Activated B cell treated with CpG ODN at 0.5 μM for 24 hours (primary cell): ENCODE measurements at regions of chr11 and their contacts with region 1.

Region 1: GRCh38 chr11:535519-536454 is at the start of gene HRAS:
- DNase-seq: peak; percentile 98
- ATAC-seq: peak; percentile 78
- H3K4me3 Mint-ChIP-seq: peak within 1 kb of the TSS; percentile 90
- H3K27ac Mint-ChIP-seq: peak within 1 kb of the TSS; percentile 96
- H3K4me1 Mint-ChIP-seq: peaks cover 26% of the 10 kb centered on the region
- H3K27me3 Mint-ChIP-seq: no peaks in the 10 kb centered on the region
- CTCF ChIP-seq: no peak
- total RNA-seq, gene HRAS: 37.2 and 43.9 TPM in 2 replicates

Region 2: GRCh38 chr11:236774-237767 is 298.7 kb before region 1 on chr11 and contains the start of gene PSMD13:
- CTCF ChIA-PET with region 1: no interaction called
- POLR2A ChIA-PET with region 1: interaction called, 3 read pairs
- intact Hi-C with region 1: loop called (anchors 1 kb)
- DNase-seq: peak; percentile 85
- ATAC-seq: peak; percentile 78
- H3K4me3 Mint-ChIP-seq: peak within 1 kb of the TSS; percentile 98
- H3K27ac Mint-ChIP-seq: peak within 1 kb of the TSS; percentile 99
- H3K4me1 Mint-ChIP-seq: peaks cover 41% of the 10 kb centered on the region
- H3K27me3 Mint-ChIP-seq: no peaks in the 10 kb centered on the region
- CTCF ChIP-seq: no peak
- total RNA-seq, gene PSMD13: 147 and 149 TPM in 2 replicates

Region 3: DNA sequence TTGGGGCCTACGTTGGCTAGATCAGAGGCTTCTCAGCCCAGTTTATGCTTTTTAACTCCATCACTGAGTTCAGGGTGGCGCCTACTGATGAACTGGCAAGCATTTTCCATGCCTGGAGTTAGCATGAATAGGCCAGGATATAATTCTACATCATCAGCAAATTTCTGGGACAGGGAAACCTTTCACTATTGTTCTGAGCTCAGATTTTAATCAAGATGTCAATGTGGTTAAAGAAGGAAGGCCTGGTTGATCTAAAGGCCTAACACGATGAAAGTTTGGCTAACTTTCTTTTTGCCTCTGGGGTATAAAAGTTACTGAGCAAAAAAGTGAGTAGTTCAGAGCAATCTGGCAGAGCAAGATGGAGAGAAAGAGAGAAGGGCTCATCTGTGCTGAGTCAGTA is 193.5 kb before region 1 on chr11:
- CTCF ChIA-PET with region 1: no interaction called
- POLR2A ChIA-PET with region 1: no interaction called
- intact Hi-C with region 1: no loop called
- DNase-seq: no peak
- ATAC-seq: no peak
- H3K4me3 Mint-ChIP-seq: no peak overlapping the region
- H3K27ac Mint-ChIP-seq: peak overlapping the region; percentile 32
- H3K4me1 Mint-ChIP-seq: peaks cover 22% of the 10 kb centered on the region
- H3K27me3 Mint-ChIP-seq: no peaks in the 10 kb centered on the region
- CTCF ChIP-seq: no peak

Region 4: DNA sequence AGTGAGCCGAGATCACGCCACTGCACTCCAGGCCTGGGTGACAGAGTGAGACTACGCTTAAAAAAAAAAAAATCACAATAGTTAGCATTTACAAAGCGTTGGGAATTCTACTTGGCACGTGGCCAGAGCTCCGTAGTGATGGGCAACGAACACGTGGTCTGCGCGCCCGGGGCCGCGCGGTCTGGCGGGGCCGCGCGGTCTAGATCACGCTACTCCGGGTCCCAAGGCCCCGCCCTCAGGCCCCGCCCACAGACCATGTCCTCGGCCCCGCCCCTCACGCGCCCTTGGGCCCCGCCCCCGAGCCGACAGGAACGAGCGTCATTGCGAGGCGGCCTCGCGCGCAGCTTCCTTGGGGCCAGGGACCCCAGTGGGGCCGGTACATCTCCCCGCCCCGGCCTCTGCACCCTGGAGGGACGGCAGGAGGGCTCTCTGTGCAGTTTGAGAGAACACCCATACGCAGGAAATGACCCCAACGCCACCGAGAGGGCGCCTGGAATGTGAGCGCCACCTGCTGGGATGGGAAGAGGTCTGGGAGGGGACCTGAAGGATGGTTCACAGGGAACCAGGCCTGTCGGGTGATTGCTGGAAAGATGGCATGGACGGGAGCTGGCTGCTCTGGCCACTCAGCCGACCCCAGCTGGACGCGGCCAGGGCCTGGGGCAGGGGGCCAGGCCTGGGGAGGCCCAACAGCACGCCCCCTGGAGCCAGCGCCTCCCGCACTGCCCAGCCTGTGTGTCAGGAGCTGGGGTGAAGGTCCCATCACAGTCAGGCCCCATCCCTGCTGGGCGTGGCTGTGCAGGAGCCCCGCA is 87.7 kb before region 1 on chr11:
- CTCF ChIA-PET with region 1: no interaction called
- POLR2A ChIA-PET with region 1: interaction called, 33 read pairs
- intact Hi-C with region 1: loop called (anchors 1 kb)
- DNase-seq: peak; percentile 97
- ATAC-seq: peak; percentile 75
- H3K4me3 Mint-ChIP-seq: peak overlapping the region; percentile 94
- H3K27ac Mint-ChIP-seq: peak overlapping the region; percentile 95
- H3K4me1 Mint-ChIP-seq: peaks cover 34% of the 10 kb centered on the region
- H3K27me3 Mint-ChIP-seq: no peaks in the 10 kb centered on the region
- CTCF ChIP-seq: no peak

Region 5: DNA sequence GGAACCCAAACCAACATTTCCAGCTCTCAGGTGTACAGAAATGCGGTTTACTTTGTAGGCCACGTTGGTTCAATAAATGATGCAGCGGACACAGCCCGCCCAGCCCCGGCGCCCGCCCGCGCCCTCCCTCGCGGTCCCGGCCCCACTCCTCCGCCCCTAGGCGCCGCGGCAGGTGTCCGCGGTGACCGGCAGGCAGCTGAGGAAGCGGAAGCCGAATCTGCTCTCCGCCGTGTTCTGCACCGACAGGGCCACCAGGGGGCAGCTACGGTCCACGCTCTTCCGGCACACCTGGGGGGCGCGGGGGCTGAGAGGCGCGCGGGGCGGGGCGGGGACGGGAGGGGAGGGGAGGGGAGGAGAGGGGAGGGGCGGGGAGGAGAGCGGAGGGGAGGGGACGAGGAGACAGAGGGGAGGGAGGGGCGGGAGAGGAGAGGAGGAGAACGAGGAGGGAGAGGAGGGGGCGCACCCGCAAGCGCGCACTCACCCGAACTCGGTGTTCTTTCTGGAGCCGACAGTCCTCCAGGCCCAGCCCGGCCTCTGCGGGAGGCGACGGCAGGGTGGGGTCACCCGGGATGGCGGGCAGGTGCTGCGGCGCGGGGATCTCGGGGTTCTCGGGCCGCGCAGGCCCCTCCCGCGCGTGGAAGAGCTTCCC is 19.2 kb after region 1 on chr11:
- CTCF ChIA-PET with region 1: interaction called, 3 read pairs
- POLR2A ChIA-PET with region 1: interaction called, 22 read pairs
- intact Hi-C with region 1: loop called (anchors 1 kb)
- DNase-seq: peak; percentile 70
- ATAC-seq: peak; percentile 93
- H3K4me3 Mint-ChIP-seq: peak overlapping the region; percentile 24
- H3K27ac Mint-ChIP-seq: no peak overlapping the region
- H3K4me1 Mint-ChIP-seq: peaks cover 6% of the 10 kb centered on the region
- H3K27me3 Mint-ChIP-seq: no peaks in the 10 kb centered on the region
- CTCF ChIP-seq: no peak

Region 6: DNA sequence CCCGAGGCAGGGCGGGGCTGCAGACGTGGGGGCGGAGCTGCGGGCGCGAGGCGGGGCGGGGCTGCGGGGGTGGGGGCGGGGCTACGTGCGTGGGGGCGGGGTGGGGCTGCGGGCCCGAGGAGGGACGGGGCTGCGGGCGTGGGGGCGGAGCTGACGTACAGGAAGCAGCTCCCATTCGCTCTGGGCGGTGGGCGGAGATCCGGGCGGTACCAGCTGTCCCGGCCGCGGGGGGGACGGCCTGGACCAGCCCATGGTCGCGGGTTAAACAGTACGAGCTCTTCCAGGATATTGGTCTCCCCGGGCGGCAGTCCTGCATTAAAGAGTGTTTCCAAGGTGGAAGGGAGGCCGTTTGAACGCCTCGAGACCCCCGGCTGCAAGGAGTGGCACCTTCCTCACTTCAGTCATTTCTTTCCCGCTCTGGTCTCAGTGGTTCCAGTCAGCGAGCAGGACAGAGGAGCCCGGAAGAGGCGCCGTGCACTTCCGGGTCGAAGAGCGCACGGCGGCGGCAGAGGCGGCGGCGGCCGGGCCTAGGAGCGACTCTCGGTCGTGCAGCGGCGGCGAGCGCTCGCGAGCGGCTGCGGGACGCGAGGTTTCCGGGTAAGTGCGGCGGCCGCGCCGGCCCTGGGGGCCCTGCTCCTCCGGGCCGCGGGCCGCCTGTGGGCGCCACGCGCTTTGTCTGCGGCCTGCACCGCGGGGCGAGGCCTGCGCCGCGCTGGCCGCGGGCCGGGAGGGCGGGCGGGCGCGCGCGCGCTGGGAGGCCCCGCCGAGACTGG is 40.4 kb after region 1 on chr11 and contains the start of gene PHRF1:
- CTCF ChIA-PET with region 1: no interaction called
- POLR2A ChIA-PET with region 1: interaction called, 43 read pairs
- intact Hi-C with region 1: loop called (anchors 1 kb)
- DNase-seq: peak; percentile 93
- ATAC-seq: peak; percentile 90
- H3K4me3 Mint-ChIP-seq: peak within 1 kb of the TSS; percentile 97
- H3K27ac Mint-ChIP-seq: peak within 1 kb of the TSS; percentile 100
- H3K4me1 Mint-ChIP-seq: peaks cover 39% of the 10 kb centered on the region
- H3K27me3 Mint-ChIP-seq: peaks cover 10% of the 10 kb centered on the region
- CTCF ChIP-seq: no peak
- total RNA-seq, gene PHRF1: 42.7 and 49.6 TPM in 2 replicates

Region 7: DNA sequence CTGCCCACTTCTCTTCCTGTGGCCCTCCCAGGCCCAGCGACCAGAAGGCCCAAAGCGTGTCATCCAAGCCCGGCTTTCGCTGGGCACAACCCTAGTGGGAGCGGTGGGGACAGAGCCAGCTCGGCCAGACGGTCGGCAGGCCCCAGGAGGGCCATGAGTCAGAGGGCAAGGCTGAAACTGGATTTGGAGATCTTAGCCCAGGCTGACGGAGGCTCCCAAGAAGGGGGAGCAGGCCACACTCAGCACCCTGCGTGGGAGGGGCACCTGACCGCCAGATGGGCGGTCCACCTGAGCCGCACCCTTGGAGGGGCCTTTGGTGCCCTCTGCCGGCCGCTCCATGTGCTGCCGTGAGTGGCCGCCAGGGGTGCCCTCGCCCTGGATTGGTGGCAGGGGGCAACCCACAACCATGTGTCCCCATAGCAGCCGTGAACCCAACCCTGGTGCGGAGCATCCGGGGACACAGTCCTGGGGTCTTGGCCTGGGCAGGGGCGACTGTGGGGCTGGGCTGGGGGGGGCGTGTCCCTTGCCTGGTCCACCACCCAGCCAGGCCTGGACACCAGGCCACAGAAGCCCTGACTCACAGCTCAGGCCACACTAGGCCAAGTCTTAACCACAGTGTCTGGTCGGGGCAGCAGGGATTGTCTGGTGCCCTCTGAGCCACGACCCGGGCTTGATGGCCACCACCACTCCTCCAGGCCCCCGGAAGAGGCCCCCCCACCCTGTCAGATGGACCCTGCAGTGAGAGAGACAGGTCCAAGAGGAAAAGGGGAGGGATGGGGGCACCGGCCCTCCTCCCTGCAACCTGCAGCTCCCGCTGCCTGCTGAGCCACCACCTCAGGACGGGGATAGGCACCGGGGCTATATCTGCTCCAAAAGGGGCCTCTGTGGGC is 192.3 kb after region 1 on chr11:
- CTCF ChIA-PET with region 1: no interaction called
- POLR2A ChIA-PET with region 1: no interaction called
- intact Hi-C with region 1: loop called (anchors 5 kb)
- DNase-seq: peak; percentile 79
- ATAC-seq: peak; percentile 85
- H3K4me3 Mint-ChIP-seq: no peak overlapping the region
- H3K27ac Mint-ChIP-seq: no peak overlapping the region
- H3K4me1 Mint-ChIP-seq: peaks cover 8% of the 10 kb centered on the region
- H3K27me3 Mint-ChIP-seq: peaks cover 5% of the 10 kb centered on the region
- CTCF ChIP-seq: peak; percentile 91

Region 8: GRCh38 chr11:819129-819931 is 283.5 kb after region 1 on chr11:
- CTCF ChIA-PET with region 1: no interaction called
- POLR2A ChIA-PET with region 1: interaction called, 12 read pairs
- intact Hi-C with region 1: no loop called
- DNase-seq: peak; percentile 95
- ATAC-seq: peak; percentile 85
- H3K4me3 Mint-ChIP-seq: peak overlapping the region; percentile 85
- H3K27ac Mint-ChIP-seq: no peak overlapping the region
- H3K4me1 Mint-ChIP-seq: peaks cover 14% of the 10 kb centered on the region
- H3K27me3 Mint-ChIP-seq: no peaks in the 10 kb centered on the region
- CTCF ChIP-seq: no peak